ENCODE measurements at regions of chr11 and their contacts with region 1.

Region 1: DNA sequence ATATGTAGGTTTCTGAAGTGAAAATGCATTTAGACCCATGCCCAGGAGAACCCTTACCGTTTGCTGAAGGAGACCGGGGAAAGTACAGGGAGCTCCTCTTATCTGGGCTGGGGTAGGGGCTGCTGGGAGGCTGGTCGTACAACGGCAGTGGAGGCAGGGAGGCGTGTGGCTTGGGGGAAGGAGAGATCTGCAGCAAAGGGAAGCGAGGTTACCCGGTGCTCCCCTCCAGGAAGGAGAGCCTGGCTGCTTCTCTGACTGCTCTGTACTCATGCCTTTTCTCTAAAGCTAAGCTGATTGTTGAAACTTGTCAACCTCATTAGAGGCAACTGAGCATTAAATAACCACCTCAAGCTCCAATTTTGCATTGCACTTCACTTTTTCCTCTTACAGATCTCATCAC is 27.2 kb downstream of the ATG16L2 start:
- DNase-seq: no peak
- H3K4me3 ChIP-seq: no peak overlapping the region
- H3K4me3 Mint-ChIP-seq: no peak overlapping the region
- H3K27ac Mint-ChIP-seq: no peak overlapping the region
- H3K4me1 ChIP-seq: no peaks in the 10 kb centered on the region
- H3K4me1 Mint-ChIP-seq: no peaks in the 10 kb centered on the region
- H3K27me3 ChIP-seq: no peaks in the 10 kb centered on the region
- H3K27me3 Mint-ChIP-seq: no peaks in the 10 kb centered on the region
- CTCF ChIP-seq: no peak

Region 2: GRCh38 chr11:72821883-72822799 is 19.3 kb before region 1 on chr11:
- CTCF ChIA-PET with region 1: no interaction called
- POLR2A ChIA-PET with region 1: interaction called, 15 read pairs
- intact Hi-C with region 1: no loop called
- DNase-seq: peak; percentile 95 to 99
- H3K4me3 ChIP-seq: peak overlapping the region; percentile 53
- H3K4me3 Mint-ChIP-seq: peak overlapping the region; percentile 74
- H3K27ac Mint-ChIP-seq: no peak overlapping the region
- H3K4me1 ChIP-seq: peaks cover 5% of the 10 kb centered on the region; the same call in 1 of the 2 replicates
- H3K4me1 Mint-ChIP-seq: no peaks in the 10 kb centered on the region
- H3K27me3 ChIP-seq: no peaks in the 10 kb centered on the region
- H3K27me3 Mint-ChIP-seq: no peaks in the 10 kb centered on the region
- CTCF ChIP-seq: peak; percentile 35 to 39

Measured in Caco-2 (cell line).